ENCODE measurements at regions of chr1 and their contacts with region 1.

Region 1: DNA sequence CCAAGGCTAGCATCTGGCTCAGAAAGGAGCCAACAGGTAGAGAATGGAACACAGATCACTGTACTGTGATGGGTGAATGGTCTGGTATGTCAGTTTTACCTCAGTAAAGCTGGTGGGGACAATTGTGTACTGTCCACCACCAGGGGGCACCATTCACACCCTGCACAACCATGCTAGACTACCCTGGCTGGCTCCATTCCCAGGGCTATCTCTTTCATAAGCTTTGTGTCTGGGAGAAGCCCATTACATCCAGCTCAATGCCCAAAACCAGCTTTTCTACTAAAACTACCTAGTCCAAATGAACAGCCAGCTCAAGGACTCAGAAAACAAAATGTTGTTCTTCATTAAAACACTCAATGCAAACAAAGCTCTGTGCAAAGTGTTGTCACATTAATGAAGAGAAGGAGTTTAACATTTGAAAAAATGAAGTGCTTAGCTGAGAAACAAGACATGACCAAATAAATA is 62.0 kb upstream of the RASAL2 start:
- ATAC-seq: peak; percentile 71 to 99 (median 89)
- H3K4me3 ChIP-seq: no peak overlapping the region
- H3K27ac ChIP-seq: no peak overlapping the region
- H3K4me1 ChIP-seq: no peaks in the 10 kb centered on the region

Region 2: GRCh38 chr1:176880954-176881595 is 1150.8 kb before region 1 on chr1:
- in situ Hi-C with region 1: no loop called
- ATAC-seq: peak; percentile 93 to 100 (median 96)
- H3K4me3 ChIP-seq: no peak overlapping the region
- H3K27ac ChIP-seq: no peak overlapping the region
- H3K4me1 ChIP-seq: no peaks in the 10 kb centered on the region

Region 3: GRCh38 chr1:178189814-178190213 is 157.9 kb after region 1 on chr1:
- in situ Hi-C with region 1: loop called in 1 of 9 experiments (anchors 25 kb)
- ATAC-seq: peak in 4 of 8 experiments; percentile 40 to 76 (median 63)
- H3K4me3 ChIP-seq: no peak overlapping the region
- H3K27ac ChIP-seq: no peak overlapping the region
- H3K4me1 ChIP-seq: no peaks in the 10 kb centered on the region

Region 4: GRCh38 chr1:178282949-178283367 is 251.1 kb after region 1 on chr1:
- in situ Hi-C with region 1: loop called in 2 of 9 experiments (anchors 10 to 25 kb)
- ATAC-seq: peak in 7 of 8 experiments; percentile 49 to 70 (median 54)
- H3K4me3 ChIP-seq: no peak overlapping the region
- H3K27ac ChIP-seq: no peak overlapping the region
- H3K4me1 ChIP-seq: peaks cover 9 to 11% of the 10 kb centered on the region in 2 donors

Measured in motor neuron (in vitro differentiated cells).